Activated CD8-positive, alpha-beta T cell treated with anti-CD3 and anti-CD28 coated beads for 36 hours (primary cell): ENCODE measurements at regions of chr10 and their contacts with region 1.

Region 1: GRCh38 chr10:3668276-3668965 is 116.6 kb downstream of the KLF6 start:
- DNase-seq: peak; percentile 80
- ATAC-seq: peak; percentile 94
- H3K4me3 Mint-ChIP-seq: peak overlapping the region; percentile 71
- H3K27ac Mint-ChIP-seq: peak overlapping the region; percentile 86
- H3K4me1 Mint-ChIP-seq: peaks cover 32% of the 10 kb centered on the region
- H3K27me3 Mint-ChIP-seq: no peaks in the 10 kb centered on the region
- CTCF ChIP-seq: no peak

Region 2: GRCh38 chr10:3468900-3469638 is 199.4 kb before region 1 on chr10:
- CTCF ChIA-PET with region 1: no interaction called
- POLR2A ChIA-PET with region 1: no interaction called
- intact Hi-C with region 1: no loop called
- DNase-seq: no peak
- ATAC-seq: no peak
- H3K4me3 Mint-ChIP-seq: no peak overlapping the region
- H3K27ac Mint-ChIP-seq: peak overlapping the region; percentile 47
- H3K4me1 Mint-ChIP-seq: peaks cover 35% of the 10 kb centered on the region
- H3K27me3 Mint-ChIP-seq: peaks cover 7% of the 10 kb centered on the region
- CTCF ChIP-seq: no peak

Region 3: GRCh38 chr10:3595736-3596135 is 72.7 kb before region 1 on chr10:
- CTCF ChIA-PET with region 1: no interaction called
- POLR2A ChIA-PET with region 1: no interaction called
- intact Hi-C with region 1: no loop called
- DNase-seq: no peak
- ATAC-seq: no peak
- H3K4me3 Mint-ChIP-seq: no peak overlapping the region
- H3K27ac Mint-ChIP-seq: no peak overlapping the region
- H3K4me1 Mint-ChIP-seq: no peaks in the 10 kb centered on the region
- H3K27me3 Mint-ChIP-seq: peaks cover 4% of the 10 kb centered on the region
- CTCF ChIP-seq: no peak

Region 4: GRCh38 chr10:3776796-3777571 is 108.6 kb after region 1 on chr10:
- CTCF ChIA-PET with region 1: no interaction called
- POLR2A ChIA-PET with region 1: interaction called, 4 read pairs
- intact Hi-C with region 1: loop called (anchors 5 kb)
- DNase-seq: peak; percentile 76
- ATAC-seq: peak; percentile 66
- H3K4me3 Mint-ChIP-seq: peak overlapping the region; percentile 56
- H3K27ac Mint-ChIP-seq: peak overlapping the region; percentile 85
- H3K4me1 Mint-ChIP-seq: peaks cover 71% of the 10 kb centered on the region
- H3K27me3 Mint-ChIP-seq: no peaks in the 10 kb centered on the region
- CTCF ChIP-seq: no peak